ENCODE measurements at regions of chr9 and their contacts with region 1.

Region 1: GRCh38 chr9:73081979-73082657 is 69.5 kb upstream of the ANXA1 start:
- DNase-seq: no peak
- ATAC-seq: peak in 2 of 8 donors; percentile 34 to 61
- H3K4me3 ChIP-seq: no peak overlapping the region
- H3K27ac ChIP-seq: no peak overlapping the region
- H3K4me1 ChIP-seq: peaks cover 0 to 3% (median 0%) of the 10 kb centered on the region in 9 donors
- H3K27me3 ChIP-seq: peaks cover 0 to 3% (median 0%) of the 10 kb centered on the region in 7 donors
- CTCF ChIP-seq: peak; percentile 51 to 86 (median 78)

Region 2: DNA sequence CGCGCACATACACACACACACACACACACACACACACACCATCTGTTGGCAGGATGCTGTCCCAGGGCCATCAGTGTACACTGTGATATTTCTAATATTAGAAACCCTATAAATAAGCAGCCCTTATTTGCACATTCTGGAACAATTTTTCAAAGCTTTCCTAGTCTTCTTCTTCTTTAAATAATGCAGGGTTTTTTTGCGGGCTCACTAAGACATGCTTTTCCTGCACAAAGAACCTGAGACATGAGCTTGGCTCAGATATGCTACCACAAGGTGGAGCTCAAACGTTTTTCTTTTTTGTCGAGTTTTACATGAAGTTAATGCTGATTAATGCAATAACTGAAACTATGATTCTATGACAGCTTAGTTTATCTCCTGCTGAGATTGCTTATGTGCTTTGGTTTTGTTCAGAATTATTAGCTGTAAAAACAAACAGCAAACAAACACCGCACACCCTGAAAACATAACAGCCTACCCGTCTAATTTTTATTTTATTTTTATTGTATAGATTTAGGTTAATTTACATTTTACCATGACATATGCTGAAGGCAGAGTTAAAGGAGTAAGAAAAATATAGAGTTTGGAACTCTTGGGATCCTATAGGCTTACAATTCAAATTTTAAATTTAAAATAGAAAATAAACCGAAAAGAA is 225.0 kb before region 1 on chr9:
- intact Hi-C with region 1: loop called in 9 of 10 experiments (anchors 5 kb)
- DNase-seq: peak in 1 of 2 donors; percentile 45
- ATAC-seq: peak; percentile 61 to 91 (median 76)
- H3K4me3 ChIP-seq: no peak overlapping the region
- H3K27ac ChIP-seq: peak overlapping the region in 4 of 10 donors; percentile 20 to 52 (median 35)
- H3K4me1 ChIP-seq: peaks cover 0 to 29% (median 18%) of the 10 kb centered on the region in 9 donors
- H3K27me3 ChIP-seq: no peaks in the 10 kb centered on the region
- CTCF ChIP-seq: peak; percentile 25 to 78 (median 68)

Region 3: GRCh38 chr9:72871685-72872084 is 210.4 kb before region 1 on chr9:
- intact Hi-C with region 1: loop called in 7 of 10 experiments (anchors 1 to 5 kb)
- DNase-seq: no peak
- ATAC-seq: peak in 1 of 8 donors; percentile 29
- H3K4me3 ChIP-seq: peak overlapping the region in 3 of 10 donors; percentile 19 to 22 (median 21)
- H3K27ac ChIP-seq: no peak overlapping the region
- H3K4me1 ChIP-seq: peaks cover 0 to 19% (median 3%) of the 10 kb centered on the region in 9 donors
- H3K27me3 ChIP-seq: no peaks in the 10 kb centered on the region
- CTCF ChIP-seq: peak; percentile 13 to 69 (median 49)

Region 4: DNA sequence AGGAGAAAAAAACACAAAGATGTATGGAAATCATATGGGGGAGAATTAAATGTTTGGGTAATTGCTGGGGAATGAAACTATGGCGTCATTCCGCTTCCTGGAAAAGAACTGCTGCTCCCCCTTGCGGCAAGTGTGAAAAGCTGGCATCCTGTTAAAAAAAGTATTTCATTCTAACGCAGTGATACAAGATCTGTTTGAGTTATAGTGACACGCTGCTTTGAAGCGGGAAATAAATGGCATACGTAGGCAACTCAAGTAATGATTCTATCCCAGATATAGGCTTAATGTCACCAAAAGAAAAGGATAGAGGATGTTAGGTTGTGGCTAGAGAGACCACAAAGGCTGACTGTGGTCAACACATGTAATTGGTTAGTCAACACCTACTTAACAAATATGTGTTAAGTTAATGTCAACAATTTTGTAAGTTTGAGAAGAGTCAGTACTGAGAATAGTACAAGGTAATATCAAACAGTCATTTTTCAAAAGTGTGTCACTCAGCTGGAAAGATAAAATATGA is 59.0 kb before region 1 on chr9:
- intact Hi-C with region 1: loop called in 4 of 10 experiments (anchors 5 to 10 kb)
- DNase-seq: peak; percentile 21 to 48
- ATAC-seq: peak in 4 of 8 donors; percentile 37 to 66 (median 62)
- H3K4me3 ChIP-seq: no peak overlapping the region
- H3K27ac ChIP-seq: no peak overlapping the region
- H3K4me1 ChIP-seq: peaks cover 0 to 9% (median 0%) of the 10 kb centered on the region in 9 donors
- H3K27me3 ChIP-seq: no peaks in the 10 kb centered on the region
- CTCF ChIP-seq: peak; percentile 62 to 88 (median 83)

Region 5: DNA sequence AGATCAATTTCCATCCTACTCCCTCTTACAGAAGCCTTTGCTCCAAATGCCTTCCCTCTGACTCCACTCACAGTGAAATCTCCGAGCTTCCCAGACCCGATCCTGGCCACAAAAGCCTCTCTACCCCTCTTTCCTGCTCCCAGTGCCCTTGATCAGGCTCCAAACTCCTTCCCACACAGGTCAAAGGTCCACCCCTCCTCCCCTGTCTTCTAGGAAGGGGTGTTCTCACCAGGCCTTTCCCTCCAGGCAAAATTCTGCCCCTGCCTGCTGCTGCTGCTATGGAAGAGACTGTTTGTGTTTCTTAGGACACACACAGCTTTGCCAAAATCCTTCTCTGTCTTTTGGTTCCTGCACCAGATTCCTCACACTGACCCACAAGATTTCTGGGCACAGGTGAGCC is 43.5 kb before region 1 on chr9:
- intact Hi-C with region 1: loop called in 1 of 10 experiments (anchors 5 kb)
- DNase-seq: peak; percentile 5 to 9
- ATAC-seq: peak in 7 of 8 donors; percentile 18 to 74 (median 52)
- H3K4me3 ChIP-seq: no peak overlapping the region
- H3K27ac ChIP-seq: no peak overlapping the region
- H3K4me1 ChIP-seq: peaks cover 0 to 21% (median 12%) of the 10 kb centered on the region in 9 donors
- H3K27me3 ChIP-seq: no peaks in the 10 kb centered on the region
- CTCF ChIP-seq: no peak

Measured in heart right ventricle (tissue), 16 donors.